MCF 10A (cell line): ENCODE measurements at regions of chr13 and their contacts with region 1.

Region 1: GRCh38 chr13:70568571-70568970 is 460.3 kb upstream of the KLHL1 start:
- DNase-seq: peak; percentile 54
- H3K4me3 Mint-ChIP-seq: no peak overlapping the region
- H3K27ac Mint-ChIP-seq: no peak overlapping the region
- H3K4me1 Mint-ChIP-seq: no peaks in the 10 kb centered on the region
- H3K27me3 Mint-ChIP-seq: peaks cover 72% of the 10 kb centered on the region
- CTCF ChIP-seq: peak; percentile 59

Region 2: DNA sequence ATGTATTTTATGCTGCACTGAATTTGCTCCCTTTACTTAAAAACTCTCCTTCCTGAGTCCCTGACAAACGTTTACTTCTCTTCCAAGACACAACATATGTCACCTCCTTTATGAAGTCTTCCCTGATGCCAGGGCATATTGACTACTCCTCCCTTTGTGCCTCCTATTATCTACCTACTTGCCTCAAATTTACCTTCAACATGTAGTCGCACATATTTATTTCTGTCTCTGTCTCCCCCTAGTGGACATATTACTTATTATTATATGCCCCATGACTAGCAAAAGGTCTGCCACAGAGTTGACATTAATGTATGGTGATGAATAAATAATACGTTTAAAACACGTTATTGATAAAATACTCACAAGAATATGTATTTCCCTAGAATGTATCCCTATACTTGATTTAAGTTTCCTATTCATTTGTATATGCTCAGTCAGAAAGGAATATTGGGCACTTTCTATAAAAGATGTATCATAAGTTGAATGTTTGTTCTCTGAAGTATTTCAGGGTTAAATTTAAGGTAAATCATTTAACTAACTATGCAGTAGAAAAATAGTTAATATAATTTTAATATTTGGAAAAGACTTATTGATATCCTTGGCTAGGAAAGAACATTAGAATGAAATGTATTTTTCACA is 711.3 kb before region 1 on chr13:
- CTCF ChIA-PET with region 1: no interaction called
- POLR2A ChIA-PET with region 1: no interaction called
- intact Hi-C with region 1: loop called (anchors 5 kb)
- DNase-seq: peak; percentile 63
- H3K4me3 Mint-ChIP-seq: no peak overlapping the region
- H3K27ac Mint-ChIP-seq: no peak overlapping the region
- H3K4me1 Mint-ChIP-seq: peaks cover 10% of the 10 kb centered on the region
- H3K27me3 Mint-ChIP-seq: peaks cover 44% of the 10 kb centered on the region
- CTCF ChIP-seq: peak; percentile 53

Region 3: GRCh38 chr13:69999875-70000274 is 568.7 kb before region 1 on chr13:
- CTCF ChIA-PET with region 1: no interaction called
- POLR2A ChIA-PET with region 1: no interaction called
- intact Hi-C with region 1: loop called (anchors 10 kb)
- DNase-seq: no peak
- H3K4me3 Mint-ChIP-seq: no peak overlapping the region
- H3K27ac Mint-ChIP-seq: no peak overlapping the region
- H3K4me1 Mint-ChIP-seq: no peaks in the 10 kb centered on the region
- H3K27me3 Mint-ChIP-seq: peaks cover 51% of the 10 kb centered on the region
- CTCF ChIP-seq: no peak

Region 4: DNA sequence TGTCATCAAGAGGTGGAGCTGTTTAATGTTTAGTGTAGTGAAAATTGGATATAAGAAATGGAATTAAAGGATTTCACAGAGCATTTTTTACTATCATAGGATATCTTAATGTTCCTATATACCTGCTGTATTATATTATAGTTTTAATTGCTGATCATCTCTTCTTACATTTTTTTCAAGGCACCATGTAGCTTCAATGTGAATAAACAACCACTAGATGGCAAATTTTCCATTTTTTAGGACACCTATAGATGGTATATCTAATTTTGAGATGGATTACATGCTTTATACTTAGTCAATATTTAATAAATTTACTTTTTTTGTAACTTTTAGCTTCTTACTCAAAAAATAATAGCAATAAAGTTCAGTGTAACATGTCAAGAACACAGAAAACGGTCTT is 469.9 kb before region 1 on chr13:
- CTCF ChIA-PET with region 1: interaction called, 11 read pairs
- POLR2A ChIA-PET with region 1: no interaction called
- intact Hi-C with region 1: loop called (anchors 1 kb)
- DNase-seq: peak; percentile 8
- H3K4me3 Mint-ChIP-seq: no peak overlapping the region
- H3K27ac Mint-ChIP-seq: no peak overlapping the region
- H3K4me1 Mint-ChIP-seq: no peaks in the 10 kb centered on the region
- H3K27me3 Mint-ChIP-seq: peaks cover 48% of the 10 kb centered on the region
- CTCF ChIP-seq: peak; percentile 47

Region 5: DNA sequence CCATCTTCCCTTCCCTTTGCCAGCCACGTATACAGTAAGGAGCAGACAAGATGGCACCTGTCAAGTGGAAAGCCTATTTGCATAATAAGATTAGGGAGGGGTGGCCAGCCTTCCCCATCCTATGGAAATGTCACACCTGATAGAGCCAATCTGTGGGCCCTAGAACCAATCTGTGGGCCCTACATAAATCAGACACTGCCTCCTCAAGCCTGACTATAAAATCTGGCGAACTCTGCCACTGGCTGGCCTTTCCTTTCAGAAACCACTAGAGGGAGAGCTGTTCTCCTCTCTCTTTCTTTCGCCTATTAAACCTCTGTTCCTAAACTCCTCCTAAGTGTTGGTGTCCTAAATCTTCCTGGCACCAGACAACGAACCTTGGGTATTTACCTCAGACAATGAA is 228.8 kb before region 1 on chr13:
- CTCF ChIA-PET with region 1: interaction called, 3 read pairs
- POLR2A ChIA-PET with region 1: no interaction called
- intact Hi-C with region 1: loop called (anchors 1 kb)
- DNase-seq: peak; percentile 52
- H3K4me3 Mint-ChIP-seq: no peak overlapping the region
- H3K27ac Mint-ChIP-seq: no peak overlapping the region
- H3K4me1 Mint-ChIP-seq: no peaks in the 10 kb centered on the region
- H3K27me3 Mint-ChIP-seq: peaks cover 82% of the 10 kb centered on the region
- CTCF ChIP-seq: peak; percentile 37